Activated T-helper 2 cell treated with anti-CD3 and anti-CD28 coated beads, Interferon-gamma antibody, Interleukin-2, Interleukin-4, amounts not matched to agents 10 μg/mL and 5 μg/mL and 100 μg/mL, durations not matched to agents 14 hours and 24 hours and 36 hours (primary cell): ENCODE measurements at regions of chr16 and their contacts with region 1.

Region 1: GRCh38 chr16:80691111-80691741 is 113.2 kb downstream of the CDYL2 start:
- DNase-seq: no peak
- H3K4me3 Mint-ChIP-seq: no peak overlapping the region
- H3K27ac Mint-ChIP-seq: no peak overlapping the region
- H3K4me1 Mint-ChIP-seq: peaks cover 42% of the 10 kb centered on the region
- H3K27me3 Mint-ChIP-seq: no peaks in the 10 kb centered on the region

Region 2: DNA sequence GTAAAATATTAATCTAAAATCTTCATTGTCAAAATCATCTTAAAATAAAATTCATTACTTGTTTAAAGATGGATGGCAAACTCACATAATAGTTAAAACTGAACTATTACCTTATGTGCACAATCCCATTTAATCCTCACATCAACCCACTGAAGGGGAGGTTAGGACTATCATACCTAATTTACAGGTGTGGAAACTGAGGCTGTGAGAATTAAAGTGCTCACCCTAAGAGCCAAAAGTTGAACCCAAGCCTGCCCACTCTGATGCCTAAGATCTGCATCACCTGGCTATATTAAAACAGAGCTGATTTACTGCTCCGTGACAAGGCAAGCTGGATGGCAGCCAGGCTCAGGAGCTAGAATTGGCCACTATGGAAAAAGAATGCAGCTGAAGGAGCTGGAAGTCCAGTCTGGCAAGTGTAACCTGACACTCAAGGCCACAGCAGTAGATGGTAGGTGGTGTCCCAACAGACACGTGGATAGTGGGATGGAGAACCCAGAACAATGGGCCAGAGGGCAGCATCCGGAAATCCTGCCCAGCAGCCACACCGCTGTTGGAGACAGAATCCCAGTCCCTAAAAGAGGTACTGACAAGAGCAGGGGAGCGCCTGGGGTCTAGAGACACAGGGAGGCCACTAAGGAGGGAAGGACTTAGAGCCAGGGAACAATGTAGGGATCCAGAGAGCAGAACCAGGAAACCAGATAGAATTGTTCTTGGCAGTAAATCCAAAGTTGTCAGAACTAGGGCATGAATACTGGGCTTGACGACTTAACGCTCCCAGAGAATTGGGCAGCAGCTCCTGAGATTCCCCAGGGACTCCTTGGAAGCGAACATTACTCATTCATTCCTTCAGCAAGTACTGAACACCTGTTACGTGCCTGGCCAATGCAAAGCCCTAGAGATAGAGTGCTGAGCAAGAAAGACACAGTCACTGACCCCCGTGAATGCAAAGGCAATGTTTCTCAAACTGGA is 27.3 kb after region 1 on chr16:
- intact Hi-C with region 1: no loop called
- DNase-seq: no peak
- H3K4me3 Mint-ChIP-seq: no peak overlapping the region
- H3K27ac Mint-ChIP-seq: no peak overlapping the region
- H3K4me1 Mint-ChIP-seq: peaks cover 7% of the 10 kb centered on the region
- H3K27me3 Mint-ChIP-seq: no peaks in the 10 kb centered on the region

Region 3: DNA sequence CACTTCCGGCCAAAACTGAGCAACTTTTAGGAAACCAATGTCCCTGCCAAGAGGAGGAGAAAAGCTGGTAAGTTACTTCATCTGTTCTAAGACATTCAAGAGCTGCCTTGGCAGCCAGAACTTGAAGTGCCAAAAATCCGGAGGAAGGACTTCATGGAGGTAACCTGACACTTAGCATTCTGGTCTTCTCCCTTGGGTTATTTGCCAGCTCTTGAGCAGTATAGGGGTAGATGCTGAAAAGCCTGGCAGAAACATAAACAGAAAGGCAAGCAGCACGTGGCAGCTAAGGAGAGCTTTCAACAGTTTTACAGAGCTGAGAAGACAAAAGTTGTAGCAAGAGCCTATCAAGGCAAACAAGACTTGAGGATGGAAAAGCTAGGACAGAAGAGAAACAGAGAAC is 60.0 kb after region 1 on chr16:
- intact Hi-C with region 1: loop called (anchors 10 kb)
- DNase-seq: no peak
- H3K4me3 Mint-ChIP-seq: no peak overlapping the region
- H3K27ac Mint-ChIP-seq: no peak overlapping the region
- H3K4me1 Mint-ChIP-seq: peaks cover 17% of the 10 kb centered on the region
- H3K27me3 Mint-ChIP-seq: peaks cover 1% of the 10 kb centered on the region

Region 4: GRCh38 chr16:81265657-81266451 is 574.6 kb after region 1 on chr16:
- intact Hi-C with region 1: no loop called
- DNase-seq: no peak
- H3K4me3 Mint-ChIP-seq: no peak overlapping the region
- H3K27ac Mint-ChIP-seq: no peak overlapping the region
- H3K4me1 Mint-ChIP-seq: peaks cover 5% of the 10 kb centered on the region
- H3K27me3 Mint-ChIP-seq: no peaks in the 10 kb centered on the region